HEK293 (cell line): ENCODE measurements at regions of chr17 and their contacts with region 1.

Region 1: DNA sequence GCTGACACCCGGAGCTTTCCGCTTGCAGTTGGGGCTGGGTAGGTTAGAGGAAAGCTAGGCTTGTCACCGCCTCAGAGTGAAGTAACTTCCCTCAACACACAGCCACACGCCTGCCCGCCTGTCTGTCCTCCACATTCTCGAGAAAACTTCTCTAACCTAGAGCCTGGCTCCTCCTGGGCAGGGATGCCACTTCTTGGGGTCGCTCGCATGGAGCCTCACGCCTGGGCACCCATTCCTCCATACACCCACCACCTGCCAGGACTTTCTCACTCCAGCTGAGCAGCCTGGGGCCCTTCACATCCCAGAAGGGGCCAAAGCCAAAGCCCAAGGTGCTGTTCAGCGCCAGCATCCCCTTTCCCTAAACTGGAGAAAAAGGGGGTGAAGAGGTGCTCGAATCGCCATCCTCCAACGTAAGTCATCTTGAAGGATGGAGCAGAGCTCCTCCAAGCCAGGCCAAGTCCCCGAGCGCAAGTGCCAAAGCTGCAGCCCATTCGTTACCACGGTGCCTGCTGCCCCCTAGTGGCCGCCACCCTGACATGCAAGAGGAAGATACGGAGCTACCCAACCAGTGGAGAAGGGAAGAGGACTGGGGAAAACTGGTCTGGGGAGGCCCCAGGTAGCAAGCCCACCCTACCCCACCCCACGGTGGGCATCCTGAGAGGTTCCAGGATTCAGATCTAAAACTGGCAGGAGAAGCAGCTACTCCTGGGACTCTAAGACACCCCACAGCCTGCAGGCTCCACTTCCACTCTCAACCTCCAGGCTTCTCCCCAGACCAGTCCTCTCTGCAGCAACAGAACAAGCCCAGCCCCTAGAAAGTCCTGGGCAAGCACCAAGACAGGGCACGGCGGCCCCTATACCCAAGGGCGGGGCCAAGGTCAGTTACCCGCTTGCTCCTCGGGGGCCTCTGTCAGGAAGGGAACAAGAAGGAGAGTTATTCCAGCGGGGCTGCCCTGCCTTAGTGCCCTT is 63.1 kb downstream of the MYO18A start:
- H3K4me3 ChIP-seq: no peak overlapping the region
- H3K27ac ChIP-seq: no peak overlapping the region
- H3K4me1 ChIP-seq: no peaks in the 10 kb centered on the region
- CTCF ChIP-seq: peak; percentile 89

Region 2: GRCh38 chr17:28901866-28902818 is 214.9 kb before region 1 on chr17:
- CTCF ChIA-PET with region 1: no interaction called
- POLR2A ChIA-PET with region 1: no interaction called
- H3K4me3 ChIP-seq: peak overlapping the region; percentile 65
- H3K27ac ChIP-seq: peak overlapping the region; percentile 77
- H3K4me1 ChIP-seq: peaks cover 4% of the 10 kb centered on the region; the same call in 1 of the 2 replicates
- CTCF ChIP-seq: peak; percentile 64

Region 3: GRCh38 chr17:28973425-28973824 is 143.7 kb before region 1 on chr17:
- CTCF ChIA-PET with region 1: interaction called, 119 read pairs
- POLR2A ChIA-PET with region 1: no interaction called
- H3K4me3 ChIP-seq: no peak overlapping the region
- H3K27ac ChIP-seq: no peak overlapping the region
- H3K4me1 ChIP-seq: no peaks in the 10 kb centered on the region
- CTCF ChIP-seq: no peak

Region 4: GRCh38 chr17:29032857-29033197 is 84.3 kb before region 1 on chr17:
- CTCF ChIA-PET with region 1: interaction called, 25 read pairs
- POLR2A ChIA-PET with region 1: no interaction called
- H3K4me3 ChIP-seq: no peak overlapping the region
- H3K27ac ChIP-seq: no peak overlapping the region
- H3K4me1 ChIP-seq: no peaks in the 10 kb centered on the region
- CTCF ChIP-seq: no peak

Region 5: GRCh38 chr17:29048440-29049368 is 68.4 kb before region 1 on chr17:
- CTCF ChIA-PET with region 1: interaction called, 22 read pairs
- POLR2A ChIA-PET with region 1: no interaction called
- H3K4me3 ChIP-seq: no peak overlapping the region
- H3K27ac ChIP-seq: no peak overlapping the region
- H3K4me1 ChIP-seq: peaks cover 8% of the 10 kb centered on the region
- CTCF ChIP-seq: no peak

Region 6: GRCh38 chr17:29089601-29090044 is 27.5 kb before region 1 on chr17:
- CTCF ChIA-PET with region 1: interaction called, 20 read pairs
- POLR2A ChIA-PET with region 1: interaction called, 3 read pairs
- H3K4me3 ChIP-seq: no peak overlapping the region
- H3K27ac ChIP-seq: no peak overlapping the region
- H3K4me1 ChIP-seq: peaks cover 7% of the 10 kb centered on the region
- CTCF ChIP-seq: no peak

Region 7: GRCh38 chr17:29219378-29220047 is 102.4 kb after region 1 on chr17:
- CTCF ChIA-PET with region 1: interaction called, 37 read pairs
- POLR2A ChIA-PET with region 1: no interaction called
- H3K4me3 ChIP-seq: no peak overlapping the region
- H3K27ac ChIP-seq: no peak overlapping the region
- H3K4me1 ChIP-seq: no peaks in the 10 kb centered on the region
- CTCF ChIP-seq: peak; percentile 94

Region 8: DNA sequence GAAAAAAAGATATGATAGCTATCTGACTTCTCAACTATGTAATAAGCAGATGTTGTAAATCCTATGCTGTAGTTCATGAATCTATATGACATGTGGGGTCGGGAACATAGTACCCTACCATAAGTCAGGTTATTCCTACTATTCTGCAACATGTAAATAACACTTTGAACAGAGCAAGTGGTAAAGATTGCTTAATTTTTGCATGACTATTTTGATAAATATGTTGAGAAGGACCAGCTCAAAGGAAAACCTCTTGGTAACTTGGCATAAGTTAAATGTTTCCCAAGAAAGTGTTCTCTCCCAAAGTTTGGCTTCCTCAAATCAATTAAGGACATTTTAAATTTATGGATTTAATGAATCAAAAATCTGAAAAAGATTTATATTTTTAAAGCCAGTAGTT is 387.6 kb after region 1 on chr17:
- CTCF ChIA-PET with region 1: no interaction called
- POLR2A ChIA-PET with region 1: no interaction called
- H3K4me3 ChIP-seq: no peak overlapping the region
- H3K27ac ChIP-seq: no peak overlapping the region
- H3K4me1 ChIP-seq: no peaks in the 10 kb centered on the region
- CTCF ChIP-seq: no peak

Region 9: DNA sequence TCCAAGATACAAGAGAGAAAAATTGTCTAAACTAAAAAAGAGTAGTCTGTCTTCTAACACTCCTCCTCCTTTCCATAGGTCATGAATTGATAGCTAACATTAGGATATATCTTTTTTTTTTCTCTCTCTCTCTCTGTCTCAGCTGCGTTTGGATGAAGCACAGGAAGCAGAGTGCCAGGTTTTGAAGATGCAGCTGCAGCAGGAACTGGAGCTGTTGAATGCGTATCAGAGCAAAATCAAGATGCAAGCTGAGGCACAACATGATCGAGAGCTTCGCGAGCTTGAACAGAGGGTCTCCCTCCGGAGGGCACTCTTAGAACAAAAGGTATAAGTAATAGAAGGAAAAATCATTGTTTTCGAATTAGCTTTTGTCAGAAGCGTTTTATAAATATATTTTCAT is 416.9 kb after region 1 on chr17:
- CTCF ChIA-PET with region 1: no interaction called
- POLR2A ChIA-PET with region 1: no interaction called
- H3K4me3 ChIP-seq: no peak overlapping the region
- H3K27ac ChIP-seq: no peak overlapping the region
- H3K4me1 ChIP-seq: no peaks in the 10 kb centered on the region
- CTCF ChIP-seq: no peak